PC-9 (cell line): ENCODE measurements at regions of chr5 and their contacts with region 1.

Region 1: DNA sequence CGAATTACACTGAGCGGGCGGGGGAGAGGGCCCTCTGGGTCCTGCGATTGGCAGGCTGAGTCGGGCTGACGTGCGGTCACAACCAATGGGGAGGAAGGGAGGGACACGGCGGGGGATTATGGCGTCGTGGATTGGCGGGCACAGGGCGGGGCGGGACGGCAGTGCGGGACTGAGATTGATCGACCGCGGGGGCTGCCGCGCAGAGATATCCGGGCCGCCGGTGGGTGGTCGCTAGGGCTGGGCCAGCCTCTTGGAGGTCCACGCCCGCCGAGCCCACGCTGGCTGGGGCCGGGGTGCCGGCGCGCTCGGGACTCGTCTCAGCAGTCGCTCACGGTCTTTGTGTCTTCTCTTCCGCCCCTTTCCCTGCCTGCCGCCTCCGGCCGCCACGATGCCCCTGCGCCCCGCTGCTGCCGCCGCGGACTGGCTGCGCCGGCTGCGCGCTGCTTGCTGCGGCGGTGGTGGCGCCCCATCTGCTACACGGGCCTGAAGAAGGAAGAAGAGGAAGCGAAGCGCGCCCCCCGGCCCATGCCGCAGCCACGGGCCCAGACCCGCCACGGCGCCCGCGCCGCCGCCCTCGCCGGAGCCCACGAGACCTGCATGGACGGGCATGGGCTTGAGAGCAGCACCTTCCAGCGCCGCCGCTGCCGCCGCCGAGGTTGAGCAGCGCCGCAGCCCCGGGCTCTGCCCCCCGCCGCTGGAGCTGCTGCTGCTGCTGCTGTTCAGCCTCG is at the start of gene RGMB:
- DNase-seq: peak; percentile 96
- H3K4me3 ChIP-seq: peak within 1 kb of the TSS; percentile 66
- H3K27ac ChIP-seq: peak within 1 kb of the TSS; percentile 82
- H3K4me1 ChIP-seq: peaks cover 30% of the 10 kb centered on the region
- H3K27me3 ChIP-seq: no peaks in the 10 kb centered on the region
- CTCF ChIP-seq: no peak
- total RNA-seq, gene RGMB: 14.2 and 14.6 TPM in 2 replicates

Region 2: DNA sequence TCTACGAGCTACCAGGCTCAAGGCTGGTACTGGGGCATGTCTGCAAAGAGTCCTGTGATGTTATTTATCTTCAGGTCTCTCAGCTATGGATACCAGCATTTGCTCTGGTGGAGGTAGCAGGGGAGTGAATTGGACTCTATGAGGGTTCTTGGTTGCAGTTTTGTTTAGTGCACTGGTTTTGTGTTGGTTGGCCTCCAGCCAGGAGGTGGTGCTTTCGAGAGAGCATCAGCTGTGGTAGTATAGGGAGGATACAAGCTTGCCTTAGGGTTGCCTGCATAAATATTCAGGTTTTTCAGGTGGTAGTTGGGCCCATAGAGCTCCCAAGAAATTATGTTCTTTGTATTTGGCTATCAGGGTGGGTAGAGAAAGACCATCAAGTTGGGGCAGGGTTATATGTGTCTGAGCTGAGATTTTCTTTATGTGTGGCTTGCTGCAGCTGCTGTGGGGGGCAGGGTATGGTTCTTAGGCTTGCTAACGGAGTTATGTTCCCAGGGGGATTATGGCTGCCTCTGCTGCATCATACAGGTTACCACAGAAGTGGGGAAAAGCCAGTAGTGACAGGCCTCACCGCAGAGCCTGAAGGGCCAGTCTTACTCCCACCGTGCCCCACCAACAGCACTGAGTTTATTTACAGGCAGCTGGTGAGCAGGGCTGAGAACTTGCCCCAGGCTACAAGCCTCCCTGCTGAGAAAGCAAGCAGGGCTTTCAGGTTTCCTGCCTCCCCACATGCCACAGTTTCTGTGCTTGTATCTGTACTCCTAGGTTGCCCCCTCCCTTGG is 1580.9 kb before region 1 on chr5:
- CTCF ChIA-PET with region 1: no interaction called
- POLR2A ChIA-PET with region 1: interaction called, 13 read pairs
- intact Hi-C with region 1: no loop called
- DNase-seq: peak; percentile 76 to 98
- H3K4me3 ChIP-seq: peak overlapping the region; percentile 43; the same call in 1 of the 2 replicates
- H3K27ac ChIP-seq: peak overlapping the region; percentile 89
- H3K4me1 ChIP-seq: peaks cover 28% of the 10 kb centered on the region
- H3K27me3 ChIP-seq: no peaks in the 10 kb centered on the region
- CTCF ChIP-seq: no peak

Region 3: DNA sequence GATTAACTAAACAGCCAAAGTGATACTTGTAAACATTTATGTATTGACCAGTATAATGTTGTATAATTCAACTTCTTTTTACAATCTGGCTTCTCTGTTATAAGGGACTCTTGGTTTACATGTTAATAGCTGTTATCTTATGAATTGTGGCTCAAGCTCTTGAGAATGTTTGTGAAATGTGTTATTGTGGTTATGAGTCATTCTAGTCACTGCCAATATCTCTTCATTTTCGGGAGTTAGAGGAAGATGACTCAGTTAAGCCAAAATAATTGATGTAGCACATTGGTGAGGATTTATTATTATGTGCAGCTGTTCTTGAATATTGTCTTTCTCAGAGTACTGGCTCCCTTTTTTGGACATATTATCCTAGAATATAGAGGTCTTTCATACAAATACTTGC is 935.4 kb before region 1 on chr5:
- CTCF ChIA-PET with region 1: no interaction called
- POLR2A ChIA-PET with region 1: no interaction called
- intact Hi-C with region 1: loop called (anchors 10 kb)
- DNase-seq: peak in 1 of 2 experiments; percentile 70
- H3K4me3 ChIP-seq: no peak overlapping the region
- H3K27ac ChIP-seq: no peak overlapping the region
- H3K4me1 ChIP-seq: peaks cover 10% of the 10 kb centered on the region; the same call in 1 of the 2 replicates
- H3K27me3 ChIP-seq: peaks cover 3% of the 10 kb centered on the region; the same call in 1 of the 2 replicates
- CTCF ChIP-seq: no peak

Region 4: GRCh38 chr5:98786191-98786853 is 12.7 kb after region 1 on chr5:
- CTCF ChIA-PET with region 1: interaction called, 6 read pairs
- POLR2A ChIA-PET with region 1: interaction called, 11 read pairs
- intact Hi-C with region 1: no loop called
- DNase-seq: peak in 1 of 2 experiments; percentile 86
- H3K4me3 ChIP-seq: no peak overlapping the region
- H3K27ac ChIP-seq: peak overlapping the region; percentile 50
- H3K4me1 ChIP-seq: peaks cover 30% of the 10 kb centered on the region
- H3K27me3 ChIP-seq: no peaks in the 10 kb centered on the region
- CTCF ChIP-seq: no peak

Region 5: DNA sequence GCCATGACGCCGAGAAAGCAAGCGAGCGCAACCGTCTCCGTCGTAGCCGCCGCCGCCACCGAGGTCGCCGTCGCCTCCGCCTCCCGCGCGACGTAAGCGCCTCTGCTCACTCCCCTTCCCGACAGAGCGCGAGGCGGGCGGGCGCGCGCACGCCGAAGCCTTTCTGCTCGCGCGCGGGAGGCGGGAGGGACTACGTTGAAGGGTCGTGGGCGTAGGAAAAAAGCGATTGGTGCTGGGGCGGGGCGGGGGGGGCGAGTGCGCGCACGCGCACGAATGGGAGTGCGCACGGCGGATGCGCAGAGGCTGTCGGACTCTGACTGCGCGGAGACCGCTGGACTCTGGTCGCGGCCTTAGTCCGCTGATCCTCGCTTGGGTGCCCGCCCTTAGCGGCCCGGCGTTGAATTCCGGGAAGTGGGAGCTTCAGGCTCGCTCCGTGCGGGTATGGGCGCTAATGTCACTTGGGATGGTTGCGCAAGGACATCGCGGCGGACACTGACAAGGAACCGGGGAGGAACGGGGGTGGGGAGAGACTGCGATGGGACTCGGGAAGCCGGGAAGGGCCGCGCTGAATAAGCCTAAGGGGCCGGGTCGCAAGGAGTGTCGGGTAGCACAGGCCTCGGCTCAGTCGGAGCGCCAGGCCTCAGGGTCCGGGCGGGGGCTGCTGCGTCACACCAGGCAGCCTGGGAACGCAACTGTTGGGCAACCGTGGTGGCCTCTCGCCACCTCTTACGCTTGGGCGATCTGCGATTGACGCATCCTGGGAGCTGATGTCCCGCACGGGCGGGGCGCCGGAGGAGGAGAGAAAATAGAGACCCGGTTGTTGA is 155.5 kb after region 1 on chr5 and contains the start of gene CHD1:
- CTCF ChIA-PET with region 1: no interaction called
- POLR2A ChIA-PET with region 1: no interaction called
- intact Hi-C with region 1: loop called (anchors 10 kb)
- DNase-seq: peak; percentile 90 to 92
- H3K4me3 ChIP-seq: peak within 1 kb of the TSS; percentile 95
- H3K27ac ChIP-seq: peak within 1 kb of the TSS; percentile 99
- H3K4me1 ChIP-seq: peaks cover 29% of the 10 kb centered on the region
- H3K27me3 ChIP-seq: no peaks in the 10 kb centered on the region
- CTCF ChIP-seq: no peak
- total RNA-seq, gene CHD1: 23.3 and 30.5 TPM in 2 replicates